ENCODE measurements at regions of chr6 and their contacts with region 1.

Region 1: DNA sequence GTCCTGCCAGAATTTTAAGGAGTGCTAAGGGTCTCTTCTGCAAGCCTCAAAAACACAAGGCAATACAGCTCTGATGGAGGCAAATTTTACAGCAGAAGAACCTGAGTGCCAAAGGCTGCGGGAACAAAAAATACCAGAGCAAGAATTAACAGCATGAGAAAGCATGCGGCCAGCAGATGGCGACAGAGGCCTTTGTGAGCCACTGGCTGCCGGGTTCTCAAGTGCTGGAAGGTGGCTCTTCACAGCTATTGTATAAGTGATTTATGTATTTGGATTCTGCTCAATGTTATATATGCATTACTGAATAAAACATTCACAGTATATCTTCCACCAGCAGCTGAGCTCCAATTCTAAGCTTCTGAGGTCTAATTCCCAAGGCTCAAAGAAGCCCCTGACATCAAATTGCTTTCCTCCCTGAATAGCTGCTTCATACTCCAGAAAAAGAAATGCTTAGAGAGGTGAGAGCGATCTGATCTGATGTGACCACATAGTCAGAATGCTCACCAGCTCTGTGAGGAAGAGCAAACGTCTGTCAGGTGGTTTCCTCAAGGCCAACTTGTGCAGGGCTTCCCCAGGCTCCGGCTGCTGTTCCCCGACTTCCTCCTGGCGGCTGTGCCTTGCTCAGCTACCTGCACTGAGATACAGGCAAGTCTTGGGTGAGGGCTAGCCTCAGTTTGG is 58.6 kb downstream of the PPP1R3G start:
- DNase-seq: peak; percentile 82
- H3K4me3 ChIP-seq: no peak overlapping the region
- H3K27ac ChIP-seq: no peak overlapping the region
- H3K4me1 ChIP-seq: no peaks in the 10 kb centered on the region
- H3K27me3 ChIP-seq: no peaks in the 10 kb centered on the region
- CTCF ChIP-seq: peak; percentile 84 to 87
- POLR2A ChIP-seq: no peak

Region 2: GRCh38 chr6:5132731-5133341 is 10.9 kb before region 1 on chr6:
- CTCF ChIA-PET with region 1: interaction called, 10 read pairs
- POLR2A ChIA-PET with region 1: no interaction called
- dilution Hi-C with region 1: no loop called
- intact Hi-C with region 1: no loop called
- DNase-seq: peak; percentile 90
- H3K4me3 ChIP-seq: no peak overlapping the region
- H3K27ac ChIP-seq: peak overlapping the region; percentile 61
- H3K4me1 ChIP-seq: peaks cover 15% of the 10 kb centered on the region
- H3K27me3 ChIP-seq: no peaks in the 10 kb centered on the region
- CTCF ChIP-seq: no peak
- POLR2A ChIP-seq: no peak

Region 3: GRCh38 chr6:5190507-5190906 is 46.7 kb after region 1 on chr6:
- CTCF ChIA-PET with region 1: interaction called, 11 read pairs
- POLR2A ChIA-PET with region 1: no interaction called
- dilution Hi-C with region 1: no loop called
- intact Hi-C with region 1: no loop called
- DNase-seq: peak; percentile 88
- H3K4me3 ChIP-seq: no peak overlapping the region
- H3K27ac ChIP-seq: peak overlapping the region; percentile 37
- H3K4me1 ChIP-seq: peaks cover 16% of the 10 kb centered on the region
- H3K27me3 ChIP-seq: no peaks in the 10 kb centered on the region
- CTCF ChIP-seq: no peak
- POLR2A ChIP-seq: no peak

Region 4: GRCh38 chr6:5231289-5231688 is 87.5 kb after region 1 on chr6:
- CTCF ChIA-PET with region 1: interaction called, 13 read pairs
- POLR2A ChIA-PET with region 1: no interaction called
- dilution Hi-C with region 1: no loop called
- intact Hi-C with region 1: no loop called
- DNase-seq: no peak
- H3K4me3 ChIP-seq: no peak overlapping the region
- H3K27ac ChIP-seq: peak overlapping the region; percentile 47
- H3K4me1 ChIP-seq: peaks cover 17% of the 10 kb centered on the region
- H3K27me3 ChIP-seq: no peaks in the 10 kb centered on the region
- CTCF ChIP-seq: no peak
- POLR2A ChIP-seq: no peak

Region 5: DNA sequence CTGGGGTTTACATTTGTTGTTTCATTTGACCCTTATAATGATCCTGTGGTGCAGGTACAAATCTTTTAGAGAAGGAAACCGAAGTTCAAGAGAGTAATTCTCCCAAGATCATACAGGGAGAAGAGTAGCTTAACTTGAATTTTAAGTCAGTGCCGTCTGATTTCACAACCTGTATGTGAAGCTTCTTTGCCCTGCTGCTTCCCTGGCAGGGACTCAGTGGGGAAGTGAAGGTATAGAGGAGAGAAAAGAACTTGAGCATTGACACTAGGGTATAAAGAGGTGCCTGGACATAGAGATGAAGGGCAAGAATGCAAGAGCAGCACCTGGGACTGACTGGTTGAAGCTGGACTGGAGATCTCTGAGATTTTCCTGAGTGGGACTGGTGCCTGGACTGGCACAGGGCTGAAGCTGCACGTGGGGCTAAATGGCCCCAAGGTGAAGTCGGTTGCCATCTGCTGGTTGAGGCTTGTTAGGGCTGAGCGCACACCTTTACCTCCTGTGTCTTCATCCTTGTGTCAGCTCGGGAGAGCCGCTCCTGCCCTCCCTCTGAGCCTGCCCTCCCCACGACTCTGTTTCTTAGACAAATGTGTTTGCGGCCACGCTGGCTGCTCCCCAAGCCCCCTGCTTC is 159.3 kb after region 1 on chr6:
- CTCF ChIA-PET with region 1: interaction called, 37 read pairs
- POLR2A ChIA-PET with region 1: no interaction called
- dilution Hi-C with region 1: no loop called
- intact Hi-C with region 1: loop called (anchors 1 kb)
- DNase-seq: peak; percentile 18
- H3K4me3 ChIP-seq: no peak overlapping the region
- H3K27ac ChIP-seq: no peak overlapping the region
- H3K4me1 ChIP-seq: no peaks in the 10 kb centered on the region
- H3K27me3 ChIP-seq: no peaks in the 10 kb centered on the region
- CTCF ChIP-seq: peak; percentile 18 to 56
- POLR2A ChIP-seq: no peak

Region 6: DNA sequence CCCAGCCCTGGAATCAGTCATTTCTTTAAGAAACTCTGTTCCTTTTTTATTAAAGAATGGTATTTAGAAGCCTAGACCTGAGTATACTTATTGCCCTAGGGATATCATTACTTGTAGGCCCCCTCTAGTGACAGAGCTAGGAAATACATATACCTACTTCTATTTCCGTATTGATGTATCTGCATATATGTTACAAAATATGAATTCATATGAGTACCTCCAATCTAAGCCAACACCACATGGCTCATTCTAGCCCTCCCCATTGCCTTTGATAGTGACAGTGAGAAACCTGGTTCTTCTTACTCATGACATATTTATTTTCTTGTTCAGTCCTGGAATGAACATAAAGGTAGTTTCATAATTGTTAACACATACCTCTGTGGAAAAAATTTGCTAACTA is 254.8 kb after region 1 on chr6:
- CTCF ChIA-PET with region 1: interaction called, 91 read pairs
- POLR2A ChIA-PET with region 1: no interaction called
- dilution Hi-C with region 1: no loop called
- intact Hi-C with region 1: loop called (anchors 1 kb)
- DNase-seq: peak; percentile 62
- H3K4me3 ChIP-seq: no peak overlapping the region
- H3K27ac ChIP-seq: no peak overlapping the region
- H3K4me1 ChIP-seq: peaks cover 2% of the 10 kb centered on the region
- H3K27me3 ChIP-seq: no peaks in the 10 kb centered on the region
- CTCF ChIP-seq: peak; percentile 26 to 27
- POLR2A ChIP-seq: no peak